Panc1 (cell line): ENCODE measurements at regions of chr22 and their contacts with region 1.

Region 1: GRCh38 chr22:36571991-36572390 is 43.0 kb upstream of the EIF3D start:
- DNase-seq: no peak
- ATAC-seq: no peak
- H3K4me3 ChIP-seq: no peak overlapping the region
- H3K27ac ChIP-seq: no peak overlapping the region
- H3K4me1 ChIP-seq: no peaks in the 10 kb centered on the region; the same call in none of the 2 replicates
- H3K27me3 ChIP-seq: no peaks in the 10 kb centered on the region
- CTCF ChIP-seq: no peak

Region 2: GRCh38 chr22:36506637-36507517 is 65.1 kb before region 1 on chr22 and contains the start of gene FOXRED2:
- CTCF ChIA-PET with region 1: no interaction called
- POLR2A ChIA-PET with region 1: no interaction called
- in situ Hi-C with region 1: no loop called
- intact Hi-C with region 1: no loop called
- DNase-seq: no peak
- ATAC-seq: peak; percentile 88
- H3K4me3 ChIP-seq: peak within 1 kb of the TSS; percentile 48 to 60
- H3K27ac ChIP-seq: peak within 1 kb of the TSS; percentile 80
- H3K4me1 ChIP-seq: no peaks in the 10 kb centered on the region
- H3K27me3 ChIP-seq: no peaks in the 10 kb centered on the region
- CTCF ChIP-seq: no peak
- total RNA-seq, gene FOXRED2: 37.7 TPM

Region 3: DNA sequence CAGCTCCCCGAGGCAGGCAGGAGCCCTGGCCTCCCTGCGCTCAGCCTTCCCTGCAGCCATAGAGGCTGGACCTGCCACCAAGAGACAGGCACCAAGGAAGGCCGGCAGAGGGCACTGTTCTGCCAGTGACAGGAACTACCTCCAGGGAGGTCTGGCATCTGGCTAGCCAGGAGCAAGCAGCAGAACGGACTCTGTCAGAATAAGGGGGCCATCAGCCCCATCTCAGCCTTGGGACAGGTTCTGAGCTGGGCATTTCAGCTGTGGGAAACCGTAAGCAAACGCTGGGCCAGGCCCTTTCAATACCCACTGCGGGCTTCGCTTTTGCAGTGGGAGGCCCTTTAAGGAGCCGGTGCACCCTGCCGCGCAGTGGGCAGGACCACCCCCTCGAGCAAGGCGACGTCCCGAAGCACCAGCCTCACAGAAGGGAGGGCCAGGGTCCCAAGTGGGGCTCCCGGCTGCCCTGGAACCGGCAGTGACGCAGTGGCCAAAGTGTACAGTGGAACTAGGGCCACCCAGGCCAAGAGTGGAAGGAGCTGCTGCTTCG is 185.7 kb after region 1 on chr22:
- CTCF ChIA-PET with region 1: interaction called, 13 read pairs
- POLR2A ChIA-PET with region 1: interaction called, 5 read pairs
- in situ Hi-C with region 1: no loop called
- intact Hi-C with region 1: no loop called
- DNase-seq: no peak
- ATAC-seq: peak; percentile 94
- H3K4me3 ChIP-seq: no peak overlapping the region
- H3K27ac ChIP-seq: no peak overlapping the region
- H3K4me1 ChIP-seq: no peaks in the 10 kb centered on the region
- H3K27me3 ChIP-seq: no peaks in the 10 kb centered on the region
- CTCF ChIP-seq: peak; percentile 87